ENCODE measurements at regions of chr12 and their contacts with region 1.

Region 1: GRCh38 chr12:57111031-57111734 is at the start of gene STAT6:
- DNase-seq: peak; percentile 62 to 95 (median 84)
- ATAC-seq: peak; percentile 63 to 72
- H3K4me3 Mint-ChIP-seq: peak within 1 kb of the TSS; percentile 89 to 99 (median 96)
- H3K27ac Mint-ChIP-seq: peak within 1 kb of the TSS; percentile 94 to 99 (median 98)
- H3K4me1 Mint-ChIP-seq: peaks cover 33 to 52% (median 50%) of the 10 kb centered on the region in 4 donors
- H3K27me3 Mint-ChIP-seq: peaks cover 0 to 2% (median 0%) of the 10 kb centered on the region in 5 donors
- polyA plus RNA-seq, gene STAT6: 80.2 to 97.1 (median 80.5) TPM

Region 2: DNA sequence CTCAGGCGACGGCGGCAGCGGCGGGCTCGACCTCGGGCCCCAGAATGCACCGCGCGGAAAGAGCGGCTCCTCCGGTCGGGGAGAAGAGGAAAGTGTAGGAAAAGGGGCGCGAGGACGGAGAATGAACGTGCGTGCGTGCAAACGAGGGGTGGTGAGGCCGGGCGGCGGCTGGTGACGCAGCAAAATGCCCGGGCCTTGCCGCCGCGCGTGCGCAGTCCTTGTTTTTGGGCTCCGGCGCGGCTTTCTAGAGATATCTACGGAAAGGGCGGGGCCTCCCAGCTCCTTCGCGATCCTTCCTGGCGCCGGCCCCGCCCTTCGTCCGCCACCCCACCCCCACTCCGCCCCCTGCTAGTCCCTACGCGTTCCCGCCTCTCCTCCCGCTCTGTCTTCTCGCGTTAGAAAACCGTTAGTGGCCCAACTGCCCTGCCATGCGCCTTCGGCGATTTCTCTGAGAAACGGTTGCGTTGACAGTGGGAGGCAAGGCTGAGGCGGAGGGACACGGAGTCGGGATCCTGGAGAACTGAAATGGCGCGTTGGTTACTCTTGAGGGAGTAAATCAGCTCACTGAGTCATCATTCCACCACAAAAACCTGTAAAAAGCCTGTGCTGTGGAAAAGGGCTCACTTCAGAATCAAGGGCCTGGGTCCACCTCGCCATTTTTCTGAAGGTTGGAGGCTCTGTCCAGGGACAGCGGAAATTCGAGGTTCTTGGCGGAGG is 422.9 kb before region 1 on chr12 and contains the start of gene PTGES3:
- POLR2A ChIA-PET with region 1: interaction called, 15 read pairs
- DNase-seq: peak; percentile 95 to 99 (median 97)
- ATAC-seq: peak; percentile 59 to 63
- H3K4me3 Mint-ChIP-seq: peak within 1 kb of the TSS; percentile 94 to 100 (median 99)
- H3K27ac Mint-ChIP-seq: peak within 1 kb of the TSS; percentile 97 to 100 (median 98)
- H3K4me1 Mint-ChIP-seq: peaks cover 18 to 41% (median 36%) of the 10 kb centered on the region in 4 donors
- H3K27me3 Mint-ChIP-seq: peaks cover 0 to 2% (median 0%) of the 10 kb centered on the region in 5 donors
- polyA plus RNA-seq, gene PTGES3: 229 to 236 (median 234) TPM

Region 3: DNA sequence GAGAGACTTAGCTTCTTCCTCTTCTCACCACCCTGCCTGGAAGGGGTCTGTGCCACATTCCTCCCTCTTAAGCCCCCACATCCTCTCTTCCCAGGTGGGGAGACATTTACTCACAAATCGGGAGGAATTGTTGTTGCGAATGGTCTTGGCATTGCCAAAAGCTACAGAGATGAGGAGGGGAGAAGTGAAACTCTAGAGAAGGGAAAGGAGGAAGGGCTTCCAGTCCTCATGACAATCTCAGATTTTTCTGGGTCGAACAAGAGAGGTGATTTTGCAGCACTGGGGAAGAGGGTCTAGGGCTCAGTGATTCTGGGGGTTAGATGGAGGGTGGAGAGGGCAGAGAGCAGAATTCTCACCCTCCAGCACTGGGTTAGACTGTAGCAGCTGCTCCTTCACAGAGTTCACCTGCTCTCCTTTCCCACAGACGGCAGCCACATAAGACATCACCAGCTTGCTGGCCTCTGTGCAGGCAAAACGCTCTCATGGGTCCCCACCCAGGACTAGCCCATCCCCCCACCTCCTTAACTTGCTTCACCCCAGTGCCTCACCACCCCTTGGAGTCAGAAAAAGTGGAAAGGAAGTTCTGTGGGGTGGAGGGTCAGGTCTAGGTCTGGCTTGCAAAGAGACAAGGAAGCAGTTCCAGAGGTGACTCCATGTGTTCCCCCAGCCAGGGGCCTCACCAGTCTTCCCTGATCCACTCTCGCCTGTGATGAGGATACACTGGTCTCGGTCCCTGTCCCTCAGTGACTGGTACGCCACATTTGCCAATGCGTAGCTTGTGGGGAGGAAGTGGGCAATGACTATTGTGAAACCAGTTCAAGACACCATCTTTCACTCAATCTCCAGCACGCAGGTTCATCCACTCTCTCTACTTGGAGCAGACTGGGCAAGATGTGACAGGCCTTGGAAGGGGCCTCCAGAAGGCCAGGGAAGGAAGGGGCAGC is 64.0 kb before region 1 on chr12:
- POLR2A ChIA-PET with region 1: interaction called, 10 read pairs
- DNase-seq: peak in 3 of 10 donors; percentile 6 to 44 (median 41)
- ATAC-seq: peak; percentile 58 to 73
- H3K4me3 Mint-ChIP-seq: peak overlapping the region; percentile 40 to 82 (median 62)
- H3K27ac Mint-ChIP-seq: peak overlapping the region; percentile 62 to 93 (median 80)
- H3K4me1 Mint-ChIP-seq: peaks cover 22 to 31% (median 28%) of the 10 kb centered on the region in 4 donors
- H3K27me3 Mint-ChIP-seq: peaks cover 0 to 2% (median 0%) of the 10 kb centered on the region in 5 donors

Region 4: GRCh38 chr12:57069523-57069922 is 41.7 kb before region 1 on chr12:
- POLR2A ChIA-PET with region 1: interaction called, 175 read pairs
- DNase-seq: peak in 9 of 10 donors; percentile 43 to 80 (median 64)
- ATAC-seq: peak; percentile 99
- H3K4me3 Mint-ChIP-seq: peak overlapping the region in 2 of 10 donors; percentile 4 to 6
- H3K27ac Mint-ChIP-seq: peak overlapping the region; percentile 44 to 91 (median 86)
- H3K4me1 Mint-ChIP-seq: peaks cover 12 to 27% (median 20%) of the 10 kb centered on the region in 4 donors
- H3K27me3 Mint-ChIP-seq: no peaks in the 10 kb centered on the region

Region 5: GRCh38 chr12:57088459-57089248 is 22.5 kb before region 1 on chr12 and contains the start of gene NAB2:
- POLR2A ChIA-PET with region 1: interaction called, 559 read pairs
- DNase-seq: peak; percentile 81 to 97 (median 92)
- ATAC-seq: peak; percentile 67 to 70
- H3K4me3 Mint-ChIP-seq: peak within 1 kb of the TSS; percentile 91 to 98 (median 96)
- H3K27ac Mint-ChIP-seq: peak within 1 kb of the TSS; percentile 89 to 99 (median 98)
- H3K4me1 Mint-ChIP-seq: peaks cover 43 to 77% (median 58%) of the 10 kb centered on the region in 4 donors
- H3K27me3 Mint-ChIP-seq: no peaks in the 10 kb centered on the region
- polyA plus RNA-seq, gene NAB2: 1.2 to 4.0 (median 1.3) TPM

Measured in naive thymus-derived CD8-positive, alpha-beta T cell (primary cell).